ENCODE measurements at regions of chr7 and their contacts with region 1.

Region 1: DNA sequence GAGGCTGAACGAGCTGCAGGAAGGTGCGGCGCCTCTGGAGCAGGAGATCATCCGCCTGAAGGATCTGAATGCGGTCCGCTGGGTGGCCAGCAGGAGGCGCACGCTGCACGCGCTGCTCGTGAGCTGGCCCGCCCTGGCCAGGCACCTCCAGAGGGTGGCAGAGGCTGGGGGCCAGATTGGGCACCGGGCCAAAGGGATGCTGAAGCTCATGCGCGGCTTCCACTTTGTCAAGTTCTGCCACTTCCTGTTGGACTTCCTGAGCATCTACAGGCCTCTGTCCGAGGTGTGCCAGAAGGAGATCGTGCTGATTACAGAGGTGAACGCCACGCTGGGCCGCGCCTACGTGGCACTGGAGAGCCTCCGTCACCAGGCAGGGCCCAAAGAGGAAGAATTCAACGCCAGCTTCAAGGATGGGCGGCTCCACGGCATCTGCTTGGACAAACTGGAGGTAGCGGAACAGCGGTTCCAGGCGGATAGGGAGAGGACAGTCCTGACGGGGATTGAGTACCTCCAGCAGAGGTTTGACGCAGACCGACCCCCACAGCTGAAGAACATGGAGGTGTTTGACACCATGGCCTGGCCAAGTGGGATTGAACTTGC is 12.2 kb upstream of the ATP6V0E2 start:
- DNase-seq: no peak
- ATAC-seq: no peak
- H3K4me3 Mint-ChIP-seq: peak overlapping the region in 1 of 10 donors; percentile 39
- H3K27ac Mint-ChIP-seq: peak overlapping the region in 1 of 10 donors; percentile 80
- H3K4me1 Mint-ChIP-seq: peaks cover 30 to 85% (median 64%) of the 10 kb centered on the region in 4 donors
- H3K27me3 Mint-ChIP-seq: no peaks in the 10 kb centered on the region

Region 2: DNA sequence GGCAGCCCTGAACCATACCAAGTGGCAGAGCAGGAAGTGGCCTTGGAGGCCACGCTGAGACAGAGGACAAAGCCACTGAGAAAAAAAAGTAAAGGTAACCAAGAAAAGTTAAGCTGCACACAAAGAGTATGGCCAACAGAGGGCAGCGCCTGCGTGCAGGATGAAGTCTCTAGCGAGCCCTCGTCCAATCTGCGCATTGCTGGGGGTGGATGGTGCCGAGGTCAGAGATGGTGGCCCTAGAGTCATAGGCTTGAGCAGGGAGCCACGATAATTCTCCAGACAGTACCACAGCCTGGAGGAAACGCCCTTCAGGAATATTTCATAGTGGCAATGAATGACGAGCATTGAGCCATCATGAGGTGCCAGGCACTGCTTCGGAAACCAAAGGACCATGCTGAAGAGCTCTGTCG is 21.9 kb after region 1 on chr7:
- POLR2A ChIA-PET with region 1: interaction called, 11 read pairs
- DNase-seq: peak in 8 of 10 donors; percentile 35 to 80 (median 53)
- ATAC-seq: peak; percentile 91 to 94
- H3K4me3 Mint-ChIP-seq: peak overlapping the region in 1 of 10 donors; percentile 26
- H3K27ac Mint-ChIP-seq: peak overlapping the region in 8 of 10 donors; percentile 12 to 84 (median 70)
- H3K4me1 Mint-ChIP-seq: peaks cover 15 to 39% (median 26%) of the 10 kb centered on the region in 4 donors
- H3K27me3 Mint-ChIP-seq: no peaks in the 10 kb centered on the region